Colonic mucosa (tissue), 4 donors: ENCODE measurements at regions of chr12 and their contacts with region 1.

Region 1: GRCh38 chr12:71415336-71416231 is 24.0 kb upstream of the LGR5 start:
- DNase-seq: peak; percentile 43
- H3K4me3 ChIP-seq: no peak overlapping the region
- H3K27ac ChIP-seq: no peak overlapping the region
- H3K4me1 ChIP-seq: no peaks in the 10 kb centered on the region
- H3K27me3 ChIP-seq: no peaks in the 10 kb centered on the region
- CTCF ChIP-seq: peak; percentile 57

Region 2: DNA sequence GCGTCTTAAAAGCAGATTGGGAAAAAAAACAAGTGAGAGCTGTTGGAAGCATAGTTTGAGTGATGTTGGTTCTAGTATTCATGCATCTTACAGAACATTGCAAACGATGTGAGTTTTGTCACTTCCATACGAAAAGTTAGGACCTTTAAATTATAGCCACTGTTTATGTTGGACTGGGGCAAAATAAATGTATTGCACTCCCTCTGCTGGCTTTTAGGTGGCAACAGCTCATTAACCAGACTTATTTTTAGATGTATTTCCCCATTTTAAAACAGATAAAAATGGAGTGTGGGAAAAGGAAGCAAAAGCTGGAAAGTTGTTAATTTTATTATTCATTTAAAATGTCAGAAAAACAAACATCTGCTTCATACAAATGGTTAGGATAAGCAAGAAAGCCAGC is 135.9 kb after region 1 on chr12:
- intact Hi-C with region 1: loop called (anchors 10 kb)
- DNase-seq: no peak
- H3K4me3 ChIP-seq: no peak overlapping the region
- H3K27ac ChIP-seq: no peak overlapping the region
- H3K4me1 ChIP-seq: no peaks in the 10 kb centered on the region
- H3K27me3 ChIP-seq: no peaks in the 10 kb centered on the region
- CTCF ChIP-seq: no peak

Region 3: DNA sequence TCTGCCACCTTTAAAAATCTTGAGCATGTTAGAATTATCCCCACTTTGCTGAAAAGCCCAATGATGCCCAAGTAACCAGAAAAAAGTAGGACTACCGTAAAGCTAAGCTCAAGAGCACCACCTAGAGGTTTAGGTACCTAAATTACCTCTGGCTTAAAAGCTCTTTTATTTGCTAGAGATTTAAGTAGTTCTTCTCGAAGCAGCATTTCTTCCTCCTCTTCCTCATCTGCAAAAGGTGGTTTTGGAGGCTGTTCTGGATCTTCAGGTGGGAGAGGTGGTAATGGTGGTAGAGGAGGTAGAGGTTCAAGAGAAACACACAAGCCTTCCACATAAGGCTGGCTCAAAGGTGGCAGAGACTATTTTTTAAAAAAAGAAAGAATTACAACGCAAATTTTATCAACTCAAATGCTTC is 221.1 kb after region 1 on chr12:
- intact Hi-C with region 1: loop called (anchors 10 kb)
- DNase-seq: no peak
- H3K4me3 ChIP-seq: no peak overlapping the region
- H3K27ac ChIP-seq: no peak overlapping the region
- H3K4me1 ChIP-seq: no peaks in the 10 kb centered on the region
- H3K27me3 ChIP-seq: no peaks in the 10 kb centered on the region
- CTCF ChIP-seq: peak; percentile 55

Region 4: GRCh38 chr12:71746983-71747611 is 331.5 kb after region 1 on chr12:
- intact Hi-C with region 1: loop called (anchors 5 kb)
- DNase-seq: peak; percentile 51
- H3K4me3 ChIP-seq: no peak overlapping the region
- H3K27ac ChIP-seq: no peak overlapping the region
- H3K4me1 ChIP-seq: no peaks in the 10 kb centered on the region
- H3K27me3 ChIP-seq: no peaks in the 10 kb centered on the region
- CTCF ChIP-seq: peak; percentile 72